ENCODE measurements at regions of chr4 and their contacts with region 1.

Region 1: DNA sequence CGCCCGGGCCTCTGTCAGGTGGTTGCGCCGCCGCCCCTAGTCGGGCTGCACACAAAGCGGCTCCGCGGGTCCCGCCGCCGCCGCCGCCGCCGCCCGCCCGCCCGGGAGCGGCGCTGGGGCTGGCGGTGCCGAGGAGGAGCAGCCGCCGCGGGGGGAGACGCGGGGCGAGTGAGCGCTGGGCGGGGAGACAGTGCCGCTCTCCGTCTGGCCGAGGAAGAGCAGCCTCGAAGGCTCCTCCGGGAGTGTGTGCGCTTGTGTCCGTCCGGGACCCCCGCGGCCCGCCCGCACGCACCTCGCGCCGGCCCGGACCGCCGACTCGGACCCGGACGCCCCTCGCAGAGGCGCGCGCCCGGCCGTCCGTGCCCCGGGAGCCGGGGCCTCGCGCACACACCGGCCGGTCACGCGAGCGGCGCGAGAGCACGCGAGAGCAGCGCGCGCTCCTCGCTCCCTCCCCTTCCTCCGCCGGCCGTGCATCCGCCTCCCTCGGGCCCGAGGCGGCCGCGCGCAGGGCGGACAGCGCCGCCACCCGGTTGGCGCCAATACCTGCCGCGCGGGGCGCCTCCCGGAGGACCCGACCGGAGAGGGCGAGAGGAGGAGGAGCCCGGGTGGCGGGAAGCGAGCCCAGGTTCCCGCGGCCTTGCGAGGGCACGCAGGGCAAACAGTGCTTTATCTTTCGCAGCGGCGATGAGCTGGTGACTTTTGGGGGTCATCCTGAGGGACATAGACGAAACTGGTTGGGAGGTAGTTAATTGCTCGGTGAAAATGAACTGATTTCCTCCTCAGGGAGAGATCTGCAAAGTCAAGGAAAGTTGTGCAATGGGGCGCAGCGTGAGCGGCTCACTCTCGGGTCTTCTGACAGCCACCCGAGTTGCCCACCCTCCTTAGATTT is at the start of gene PDS5A:
- DNase-seq: peak; percentile 91
- H3K4me3 Mint-ChIP-seq: peak within 1 kb of the TSS; percentile 82
- H3K27ac Mint-ChIP-seq: peak within 1 kb of the TSS; percentile 83
- H3K4me1 Mint-ChIP-seq: peaks cover 6% of the 10 kb centered on the region
- H3K27me3 Mint-ChIP-seq: no peaks in the 10 kb centered on the region
- CTCF ChIP-seq: peak; percentile 83
- total RNA-seq, gene PDS5A: 86.8 and 95.2 TPM in 2 replicates

Region 2: DNA sequence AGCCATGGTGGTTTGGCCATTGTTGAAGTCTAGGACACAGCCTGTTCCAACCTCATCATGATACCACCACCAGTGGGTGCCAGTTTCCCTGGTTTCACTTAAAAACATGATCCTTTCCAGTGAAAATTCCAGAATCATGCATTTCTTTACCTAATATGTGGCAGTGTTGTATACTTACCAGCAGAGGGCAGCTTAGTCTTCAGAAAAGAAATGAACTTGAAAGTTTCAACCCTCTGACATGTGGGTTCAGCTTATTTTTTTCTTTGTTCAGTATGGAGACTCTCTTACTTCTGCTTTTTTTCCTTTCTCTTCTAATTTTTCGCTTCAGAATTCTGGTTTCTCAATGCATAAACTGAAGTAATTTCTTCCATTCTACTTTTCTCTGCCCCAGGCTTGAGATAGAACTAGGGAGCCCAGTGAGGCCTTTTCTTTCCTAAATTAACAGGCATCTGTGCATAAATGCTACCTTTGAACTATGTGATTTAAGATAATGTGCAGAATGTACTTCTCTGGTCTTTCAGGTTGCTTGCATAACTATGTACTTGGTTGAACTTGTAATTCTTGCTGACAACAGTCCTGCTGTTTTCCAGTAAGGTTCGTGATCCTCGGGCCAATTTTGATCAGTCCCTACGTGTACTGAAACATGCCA is 508.2 kb before region 1 on chr4:
- CTCF ChIA-PET with region 1: interaction called, 6 read pairs
- POLR2A ChIA-PET with region 1: interaction called, 3 read pairs
- intact Hi-C with region 1: loop called (anchors 1 kb)
- DNase-seq: peak; percentile 80
- H3K4me3 Mint-ChIP-seq: no peak overlapping the region
- H3K27ac Mint-ChIP-seq: no peak overlapping the region
- H3K4me1 Mint-ChIP-seq: peaks cover 13% of the 10 kb centered on the region
- H3K27me3 Mint-ChIP-seq: no peaks in the 10 kb centered on the region
- CTCF ChIP-seq: peak; percentile 71

Region 3: DNA sequence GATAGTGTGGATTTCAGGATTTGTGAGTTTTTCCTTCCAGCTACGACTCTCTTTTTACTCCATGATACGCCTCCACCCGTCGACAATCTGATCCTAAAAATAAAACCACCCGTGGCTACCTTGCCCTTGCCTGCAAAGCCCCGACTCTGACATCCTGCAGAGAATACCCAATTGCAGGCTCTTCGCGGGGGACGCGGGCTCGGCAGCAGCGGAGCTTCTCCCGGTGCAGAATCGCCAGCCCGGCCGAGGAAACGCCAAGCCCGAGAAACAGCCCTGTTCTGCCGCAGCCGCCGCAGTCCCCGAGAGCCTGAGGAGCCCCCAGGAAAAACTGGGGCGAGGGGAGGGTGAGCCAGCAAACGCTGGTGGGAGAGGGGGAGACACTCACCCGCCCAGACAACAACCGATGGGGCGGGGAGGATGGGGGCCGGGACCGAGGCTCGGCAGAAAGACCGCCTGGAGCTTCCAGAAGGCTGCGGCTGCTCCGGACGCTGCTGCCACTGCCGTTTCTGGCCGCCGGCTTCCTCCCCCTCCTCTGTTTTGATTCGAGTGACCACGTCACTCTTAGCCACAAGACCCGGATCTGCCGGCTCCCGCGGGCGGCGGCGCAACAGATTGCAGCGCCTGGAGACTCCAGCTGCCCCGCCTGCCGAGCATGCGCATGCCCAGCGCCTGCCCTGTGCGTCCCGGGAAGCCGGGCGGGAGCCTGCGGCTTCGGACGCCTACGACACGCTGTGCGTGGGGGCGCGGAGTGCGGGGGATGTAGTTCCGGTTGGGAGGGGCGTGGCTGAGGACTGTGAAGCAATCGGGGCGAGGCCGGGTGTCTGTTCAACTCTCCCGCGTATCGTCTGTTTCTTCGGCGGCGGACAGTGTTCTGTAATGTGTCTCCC is 339.1 kb before region 1 on chr4 and contains the start of gene SMIM14:
- CTCF ChIA-PET with region 1: no interaction called
- POLR2A ChIA-PET with region 1: interaction called, 8 read pairs
- intact Hi-C with region 1: loop called (anchors 2 kb)
- DNase-seq: peak; percentile 98
- H3K4me3 Mint-ChIP-seq: peak within 1 kb of the TSS; percentile 87
- H3K27ac Mint-ChIP-seq: peak within 1 kb of the TSS; percentile 95
- H3K4me1 Mint-ChIP-seq: peaks cover 15% of the 10 kb centered on the region
- H3K27me3 Mint-ChIP-seq: no peaks in the 10 kb centered on the region
- CTCF ChIP-seq: no peak
- total RNA-seq, gene SMIM14: 27.3 and 36.0 TPM in 2 replicates

Region 4: DNA sequence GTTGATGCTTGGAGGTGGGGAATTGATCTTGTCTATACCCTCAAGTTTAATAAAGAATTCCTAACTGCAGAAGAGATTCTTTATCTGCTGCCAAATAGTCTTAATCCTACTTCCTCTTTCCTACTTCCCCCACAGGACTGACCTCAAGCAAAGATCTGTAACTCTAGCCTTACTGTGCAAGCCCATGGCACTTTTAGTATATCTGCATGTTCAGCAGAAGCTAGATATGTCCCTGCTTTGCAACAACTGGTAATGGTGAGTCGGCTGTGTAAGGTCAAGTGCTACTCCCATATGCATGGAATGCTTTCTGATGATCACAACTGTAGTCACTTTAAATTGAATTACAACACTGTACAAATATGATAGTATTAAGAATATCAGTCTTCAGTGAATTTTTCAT is 26.3 kb after region 1 on chr4:
- CTCF ChIA-PET with region 1: interaction called, 11 read pairs
- POLR2A ChIA-PET with region 1: interaction called, 3 read pairs
- intact Hi-C with region 1: no loop called
- DNase-seq: no peak
- H3K4me3 Mint-ChIP-seq: no peak overlapping the region
- H3K27ac Mint-ChIP-seq: no peak overlapping the region
- H3K4me1 Mint-ChIP-seq: no peaks in the 10 kb centered on the region
- H3K27me3 Mint-ChIP-seq: no peaks in the 10 kb centered on the region
- CTCF ChIP-seq: no peak

Region 5: DNA sequence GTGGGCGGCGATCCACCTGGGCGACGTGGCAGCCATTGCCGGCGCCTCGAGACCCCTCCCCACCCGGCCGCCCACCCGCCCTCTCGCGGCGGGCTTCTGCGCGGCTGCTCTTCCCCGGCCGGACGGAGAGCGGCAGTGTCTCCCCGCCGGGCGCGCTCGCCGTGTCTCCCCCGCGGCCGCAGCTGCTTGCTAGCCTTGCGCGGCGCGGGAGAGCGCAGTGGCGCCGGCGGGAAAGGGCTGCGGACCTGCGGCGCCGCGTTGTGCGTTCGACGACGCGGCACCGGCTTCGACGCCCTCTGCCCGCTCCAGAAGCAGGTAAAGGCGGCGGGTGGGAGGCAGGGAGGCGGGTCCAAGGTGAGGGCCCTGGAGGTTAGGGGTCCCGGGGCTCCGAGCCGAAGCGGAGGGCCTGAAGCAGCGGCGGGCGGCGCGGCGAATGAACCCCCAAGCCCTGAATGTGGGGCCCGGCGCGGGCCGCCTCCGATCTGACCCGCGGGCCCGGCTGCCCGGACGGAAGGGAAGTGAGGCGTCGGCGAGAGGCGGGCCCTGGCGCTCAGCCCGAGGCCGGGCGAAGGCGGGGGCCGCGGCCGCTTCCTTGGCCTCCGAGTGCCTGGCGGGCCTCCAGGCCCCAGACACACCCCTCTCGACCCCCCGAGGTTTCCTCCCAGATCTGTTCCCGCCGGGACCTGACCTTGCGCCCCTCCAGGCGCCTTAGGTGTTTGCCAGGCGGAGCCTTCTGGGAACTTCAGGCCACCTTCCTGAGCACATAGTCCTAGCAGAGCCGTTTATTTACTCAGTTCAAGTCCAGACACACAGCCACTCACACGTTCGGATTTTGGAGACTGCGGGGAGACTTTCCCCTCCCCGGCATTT is 79.2 kb after region 1 on chr4 and contains the start of gene N4BP2:
- CTCF ChIA-PET with region 1: interaction called, 5 read pairs
- POLR2A ChIA-PET with region 1: interaction called, 16 read pairs
- intact Hi-C with region 1: loop called (anchors 1 kb)
- DNase-seq: peak; percentile 96
- H3K4me3 Mint-ChIP-seq: peak within 1 kb of the TSS; percentile 78
- H3K27ac Mint-ChIP-seq: peak within 1 kb of the TSS; percentile 93
- H3K4me1 Mint-ChIP-seq: peaks cover 11% of the 10 kb centered on the region
- H3K27me3 Mint-ChIP-seq: no peaks in the 10 kb centered on the region
- CTCF ChIP-seq: peak; percentile 93
- total RNA-seq, gene N4BP2: 8.3 and 8.8 TPM in 2 replicates

Region 6: GRCh38 chr4:40462326-40462725 is 484.6 kb after region 1 on chr4:
- CTCF ChIA-PET with region 1: no interaction called
- POLR2A ChIA-PET with region 1: no interaction called
- intact Hi-C with region 1: no loop called
- DNase-seq: no peak
- H3K4me3 Mint-ChIP-seq: no peak overlapping the region
- H3K27ac Mint-ChIP-seq: no peak overlapping the region
- H3K4me1 Mint-ChIP-seq: no peaks in the 10 kb centered on the region
- H3K27me3 Mint-ChIP-seq: no peaks in the 10 kb centered on the region
- CTCF ChIP-seq: no peak

Measured in MCF 10A (cell line).